ENCODE measurements at regions of chr1 and their contacts with region 1.

Region 1: DNA sequence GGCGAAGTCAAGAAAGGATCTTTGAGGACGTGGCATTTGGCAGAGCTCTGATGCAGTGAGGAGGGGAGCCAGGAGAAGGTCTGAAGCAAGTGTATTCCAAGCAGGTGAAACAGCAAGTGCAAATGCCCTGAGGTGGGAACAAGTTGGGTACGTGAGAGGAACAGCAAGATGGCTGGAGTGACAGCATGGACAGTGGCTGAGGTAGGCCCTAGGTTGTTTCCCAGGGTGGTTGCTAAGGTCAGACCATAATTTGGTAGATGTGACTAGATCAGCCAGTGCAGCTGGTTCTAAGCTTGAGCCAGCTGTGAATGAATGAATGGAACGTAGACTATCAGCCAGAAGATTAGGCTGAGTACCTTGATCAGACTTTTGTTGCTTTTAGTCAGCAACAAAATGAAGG is 37.5 kb upstream of the JUN start:
- DNase-seq: no peak
- ATAC-seq: no peak
- H3K4me3 ChIP-seq: no peak overlapping the region
- H3K27ac ChIP-seq: no peak overlapping the region; the same call in 1 of the 2 replicates
- H3K4me1 ChIP-seq: peaks cover 28% of the 10 kb centered on the region
- H3K27me3 ChIP-seq: no peaks in the 10 kb centered on the region
- CTCF ChIP-seq: no peak

Region 2: DNA sequence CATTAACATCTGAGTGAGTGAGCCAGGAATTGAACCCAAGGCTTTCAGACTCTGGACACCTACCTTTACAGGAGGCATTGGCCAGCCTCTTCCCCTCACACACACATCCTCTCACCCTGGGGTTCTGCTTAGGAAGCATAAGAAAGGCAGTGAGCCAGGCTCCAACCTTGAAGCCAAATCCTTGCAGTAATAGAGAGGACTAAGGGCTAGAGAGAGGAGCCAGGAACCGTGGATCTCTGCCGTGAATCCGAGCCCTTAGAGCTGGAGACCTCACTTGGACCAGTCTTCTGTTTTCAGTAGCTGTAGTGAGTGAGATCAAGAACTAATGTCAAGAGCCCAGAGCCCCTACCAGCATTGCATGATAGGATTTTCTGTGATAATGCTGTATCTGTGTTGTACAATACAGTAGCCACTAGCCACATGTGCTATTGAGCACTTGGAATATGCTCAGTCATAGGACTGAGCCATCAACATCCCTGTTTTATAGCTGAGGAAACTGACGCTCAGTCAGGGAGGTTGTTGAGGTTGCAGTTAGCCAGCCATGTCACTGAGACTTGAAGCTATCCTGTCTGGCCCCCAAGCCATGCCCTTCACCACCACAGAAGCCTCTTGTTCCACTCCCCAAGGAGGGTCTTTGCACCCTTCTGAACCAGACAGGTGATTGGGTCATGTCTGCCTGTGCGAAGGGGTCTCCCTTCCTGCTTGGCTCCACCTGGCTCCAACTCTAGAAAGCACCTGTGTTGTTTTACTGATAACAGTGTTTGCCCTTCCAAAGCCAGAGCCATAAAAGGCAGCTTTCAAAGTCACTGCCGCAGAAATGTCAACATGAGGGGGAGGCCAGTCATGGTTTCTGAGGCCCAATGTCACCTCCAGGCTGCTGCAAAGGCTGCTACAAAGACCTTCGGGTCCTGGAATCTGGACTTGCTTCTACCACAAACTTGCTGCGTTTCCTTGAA is 63.7 kb after region 1 on chr1:
- CTCF ChIA-PET with region 1: no interaction called
- POLR2A ChIA-PET with region 1: no interaction called
- in situ Hi-C with region 1: no loop called
- intact Hi-C with region 1: no loop called
- DNase-seq: no peak
- ATAC-seq: peak; percentile 88
- H3K4me3 ChIP-seq: peak overlapping the region in 1 of 2 experiments; percentile 7; a peak in 2 of 4 replicates
- H3K27ac ChIP-seq: peak overlapping the region; percentile 81
- H3K4me1 ChIP-seq: peaks cover 45% of the 10 kb centered on the region
- H3K27me3 ChIP-seq: no peaks in the 10 kb centered on the region
- CTCF ChIP-seq: no peak

Region 3: GRCh38 chr1:60342569-60342968 is 1521.3 kb after region 1 on chr1:
- CTCF ChIA-PET with region 1: interaction called, 14 read pairs
- POLR2A ChIA-PET with region 1: no interaction called
- in situ Hi-C with region 1: no loop called
- intact Hi-C with region 1: no loop called
- DNase-seq: no peak
- ATAC-seq: no peak
- H3K4me3 ChIP-seq: no peak overlapping the region
- H3K27ac ChIP-seq: no peak overlapping the region
- H3K4me1 ChIP-seq: no peaks in the 10 kb centered on the region
- H3K27me3 ChIP-seq: no peaks in the 10 kb centered on the region
- CTCF ChIP-seq: no peak

Measured in Panc1 (cell line).